Ascending aorta (tissue), 2 donors: ENCODE measurements at regions of chr12 and their contacts with region 1.

Region 1: GRCh38 chr12:9750276-9751203 is 10.2 kb downstream of the CD69 start:
- DNase-seq: no peak
- H3K4me3 ChIP-seq: peak overlapping the region in 1 of 2 donors; percentile 13
- H3K27ac ChIP-seq: no peak overlapping the region
- H3K4me1 ChIP-seq: no peaks in the 10 kb centered on the region
- H3K27me3 ChIP-seq: no peaks in the 10 kb centered on the region
- CTCF ChIP-seq: peak; percentile 36 to 89 (median 77)

Region 2: DNA sequence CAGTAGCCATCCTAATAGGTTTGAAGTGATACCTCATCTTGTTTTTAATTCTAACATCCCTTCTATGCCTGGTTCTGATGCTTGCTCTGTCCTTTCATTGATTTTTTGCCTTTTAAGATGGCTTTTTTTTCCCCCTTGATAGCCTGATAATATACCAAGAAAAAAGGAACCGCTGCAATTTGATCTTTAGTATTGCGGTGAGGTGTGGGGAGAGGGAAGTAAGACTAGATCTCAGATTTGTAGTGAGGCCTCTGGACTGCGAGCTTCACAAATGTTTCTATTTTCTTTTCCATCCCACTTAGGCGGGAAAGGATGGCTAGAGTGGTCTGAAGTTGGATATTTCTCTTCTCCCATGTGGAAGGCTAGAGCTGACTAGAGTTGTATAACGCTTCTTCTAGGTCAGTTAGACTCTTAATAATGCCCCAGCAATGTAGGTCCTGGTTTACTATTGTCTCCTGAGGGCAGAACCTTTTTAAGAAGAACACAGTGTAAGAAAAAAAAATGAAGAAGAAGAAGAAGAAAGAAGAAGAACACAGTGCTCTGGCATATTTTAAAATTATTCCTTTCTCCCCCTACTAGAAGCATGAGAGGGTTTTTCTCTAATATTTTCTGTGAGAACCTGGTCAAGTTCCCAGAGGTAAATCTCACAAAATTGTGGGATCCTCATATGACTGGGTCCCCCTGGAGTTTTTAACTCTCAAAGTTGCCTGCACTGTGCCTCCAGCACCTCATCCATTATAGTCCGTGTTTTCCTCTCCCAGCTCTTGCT is 130.9 kb before region 1 on chr12:
- intact Hi-C with region 1: no loop called
- DNase-seq: no peak
- H3K4me3 ChIP-seq: no peak overlapping the region
- H3K27ac ChIP-seq: no peak overlapping the region
- H3K4me1 ChIP-seq: no peaks in the 10 kb centered on the region
- H3K27me3 ChIP-seq: no peaks in the 10 kb centered on the region
- CTCF ChIP-seq: no peak

Region 3: GRCh38 chr12:9731797-9732196 is 18.7 kb before region 1 on chr12:
- intact Hi-C with region 1: no loop called
- DNase-seq: no peak
- H3K4me3 ChIP-seq: no peak overlapping the region
- H3K27ac ChIP-seq: no peak overlapping the region
- H3K4me1 ChIP-seq: no peaks in the 10 kb centered on the region
- H3K27me3 ChIP-seq: no peaks in the 10 kb centered on the region
- CTCF ChIP-seq: no peak

Region 4: DNA sequence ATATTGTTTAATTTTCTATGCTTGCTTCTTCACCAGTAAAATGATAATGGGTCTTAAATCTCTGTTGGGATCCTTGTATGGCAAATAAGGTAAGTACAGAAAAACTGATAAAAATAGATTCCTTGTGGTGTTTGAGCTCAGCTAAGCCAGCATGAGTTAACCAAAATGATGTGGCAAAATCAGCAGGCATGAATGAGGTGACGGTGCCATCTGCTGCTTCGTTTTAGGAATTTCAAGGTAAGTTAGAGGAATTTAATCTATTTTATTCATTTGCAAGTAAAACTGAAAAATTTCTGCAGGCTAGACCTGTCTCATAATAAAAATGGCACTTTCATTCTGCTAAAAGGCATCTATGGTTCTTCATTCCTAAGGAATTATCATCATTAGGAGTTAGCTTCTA is 389.5 kb after region 1 on chr12:
- intact Hi-C with region 1: loop called (anchors 5 kb)
- DNase-seq: no peak
- H3K4me3 ChIP-seq: no peak overlapping the region
- H3K27ac ChIP-seq: no peak overlapping the region
- H3K4me1 ChIP-seq: no peaks in the 10 kb centered on the region
- H3K27me3 ChIP-seq: no peaks in the 10 kb centered on the region
- CTCF ChIP-seq: peak; percentile 13 to 40 (median 22)